A549 (cell line): ENCODE measurements at regions of chr17 and their contacts with region 1.

Region 1: GRCh38 chr17:3913531-3914311 is 2.5 kb downstream of the P2RX1 start:
- DNase-seq: peak; percentile 77 to 91
- ATAC-seq: peak; percentile 73 to 92
- H3K4me3 ChIP-seq: no peak overlapping the region
- H3K27ac ChIP-seq: peak overlapping the region in 1 of 2 experiments; percentile 65; a peak in 3 of 6 replicates
- H3K4me1 ChIP-seq: peaks cover 21% of the 10 kb centered on the region; the same call in 2 of the 3 replicates
- CTCF ChIP-seq: peak; percentile 94
- EP300 ChIP-seq: no peak
- POLR2A ChIP-seq: no peak
- RAD21 ChIP-seq: peak; percentile 88 to 91

Region 2: DNA sequence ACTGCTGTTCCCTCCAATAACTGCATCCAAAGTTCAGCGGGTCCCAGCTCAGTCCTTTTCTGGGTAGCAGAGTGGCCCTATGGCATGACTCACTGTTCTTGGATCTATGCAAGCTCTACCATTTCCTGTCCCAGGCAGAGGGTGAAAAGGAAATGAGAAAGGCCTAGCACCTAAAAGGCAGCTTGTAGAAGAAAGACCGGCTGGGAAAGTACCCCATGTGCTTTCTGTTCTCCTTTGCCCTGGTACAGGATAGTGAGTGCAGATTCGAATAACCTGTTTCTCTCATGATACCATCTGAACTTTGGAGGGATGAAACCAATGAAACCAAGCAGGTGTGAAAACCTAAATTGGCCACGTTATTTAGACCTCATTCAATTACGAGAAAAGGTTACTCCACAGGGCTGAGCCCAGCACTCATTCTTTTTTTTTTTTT is 202.8 kb before region 1 on chr17:
- CTCF ChIA-PET with region 1: no interaction called
- POLR2A ChIA-PET with region 1: no interaction called
- DNase-seq: no peak
- ATAC-seq: peak; percentile 39 to 42; a peak in 2 of 6 replicates
- H3K4me3 ChIP-seq: no peak overlapping the region
- H3K27ac ChIP-seq: no peak overlapping the region
- H3K4me1 ChIP-seq: no peaks in the 10 kb centered on the region
- CTCF ChIP-seq: no peak
- EP300 ChIP-seq: no peak
- POLR2A ChIP-seq: no peak
- RAD21 ChIP-seq: no peak

Region 3: GRCh38 chr17:3827124-3827773 is 86.5 kb before region 1 on chr17:
- CTCF ChIA-PET with region 1: interaction called, 14 read pairs
- POLR2A ChIA-PET with region 1: no interaction called
- DNase-seq: peak; percentile 75 to 86
- ATAC-seq: peak; percentile 86 to 88
- H3K4me3 ChIP-seq: no peak overlapping the region
- H3K27ac ChIP-seq: no peak overlapping the region
- H3K4me1 ChIP-seq: no peaks in the 10 kb centered on the region
- CTCF ChIP-seq: peak; percentile 87
- EP300 ChIP-seq: no peak
- POLR2A ChIP-seq: no peak
- RAD21 ChIP-seq: peak; percentile 81 to 88

Region 4: DNA sequence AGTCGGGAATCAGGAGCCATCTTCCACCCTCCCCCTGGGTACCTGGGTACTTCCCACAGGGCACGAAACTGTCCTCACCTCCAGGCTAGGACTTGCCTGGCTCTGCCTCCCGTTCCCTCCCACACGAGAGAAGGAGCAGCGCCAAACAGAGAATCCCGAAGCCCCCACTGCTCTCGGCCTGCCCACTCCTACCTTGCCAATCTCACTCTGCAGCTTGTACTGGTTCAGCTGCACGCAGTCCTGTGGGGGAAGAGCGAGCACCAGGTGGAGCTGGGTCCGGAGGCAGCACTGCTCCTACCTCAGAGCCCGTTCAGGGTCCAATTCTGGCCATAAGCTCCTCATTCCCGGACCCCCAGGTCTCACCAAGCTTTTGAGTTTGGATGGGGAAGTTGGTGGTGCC is 29.5 kb before region 1 on chr17:
- CTCF ChIA-PET with region 1: interaction called, 31 read pairs
- POLR2A ChIA-PET with region 1: no interaction called
- DNase-seq: no peak
- ATAC-seq: no peak
- H3K4me3 ChIP-seq: no peak overlapping the region
- H3K27ac ChIP-seq: no peak overlapping the region
- H3K4me1 ChIP-seq: peaks cover 37% of the 10 kb centered on the region
- CTCF ChIP-seq: no peak
- EP300 ChIP-seq: no peak
- POLR2A ChIP-seq: no peak
- RAD21 ChIP-seq: no peak

Region 5: GRCh38 chr17:3946711-3947235 is 33.1 kb after region 1 on chr17:
- CTCF ChIA-PET with region 1: interaction called, 29 read pairs
- POLR2A ChIA-PET with region 1: no interaction called
- DNase-seq: no peak
- ATAC-seq: peak in 1 of 2 experiments; percentile 10; a peak in 1 of 6 replicates
- H3K4me3 ChIP-seq: no peak overlapping the region
- H3K27ac ChIP-seq: no peak overlapping the region
- H3K4me1 ChIP-seq: no peaks in the 10 kb centered on the region
- CTCF ChIP-seq: no peak
- EP300 ChIP-seq: no peak
- POLR2A ChIP-seq: no peak
- RAD21 ChIP-seq: no peak

Region 6: DNA sequence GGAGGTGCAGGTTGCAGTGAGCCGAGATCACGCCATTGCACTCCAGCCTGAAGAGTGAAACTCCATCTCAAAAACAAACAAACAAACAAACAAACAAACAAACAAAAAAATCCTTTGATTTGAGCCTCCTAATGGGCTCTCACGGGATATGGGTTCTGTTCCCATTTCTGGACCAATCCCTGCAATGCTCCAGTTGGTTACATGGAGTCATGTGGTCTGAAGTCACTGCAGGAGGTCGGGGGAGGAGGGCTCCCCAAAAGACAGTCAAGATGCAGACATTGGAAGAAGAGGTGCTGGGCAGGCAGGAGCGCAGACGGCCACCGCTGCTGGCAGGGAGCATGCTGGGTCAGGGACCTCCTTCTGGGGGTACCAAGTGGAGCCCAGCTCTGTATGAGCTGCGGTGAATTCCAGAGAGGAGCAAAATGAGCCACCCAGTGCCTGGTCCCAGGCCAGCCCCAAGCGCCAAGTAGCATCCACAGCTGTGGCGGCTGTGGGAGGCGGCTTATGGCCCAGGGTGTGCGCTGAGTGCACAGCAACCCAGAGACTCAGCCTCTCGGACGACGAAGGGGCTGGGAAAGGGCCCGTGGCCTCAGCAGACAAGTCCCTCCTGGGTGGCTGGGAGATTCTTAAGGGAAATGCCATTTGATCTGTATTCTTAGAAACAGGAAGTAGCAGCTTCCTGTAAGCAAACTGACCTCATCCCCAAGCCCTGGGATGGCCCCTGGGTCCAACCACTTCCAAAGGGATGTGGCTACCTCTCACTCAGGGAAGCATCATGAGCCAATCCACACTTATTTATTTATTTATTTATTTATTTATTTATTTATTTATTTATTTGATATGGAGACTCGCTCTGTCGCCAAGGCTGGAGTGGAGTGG is 70.1 kb after region 1 on chr17:
- CTCF ChIA-PET with region 1: interaction called, 10 read pairs
- POLR2A ChIA-PET with region 1: no interaction called
- DNase-seq: peak in 1 of 2 experiments; percentile 48
- ATAC-seq: no peak
- H3K4me3 ChIP-seq: no peak overlapping the region
- H3K27ac ChIP-seq: no peak overlapping the region
- H3K4me1 ChIP-seq: 0 out of 3 replicates have a peak, but pooled peaks cover 4% of the 10 kb centered on the region
- CTCF ChIP-seq: no peak
- EP300 ChIP-seq: no peak
- POLR2A ChIP-seq: no peak
- RAD21 ChIP-seq: no peak

Region 7: DNA sequence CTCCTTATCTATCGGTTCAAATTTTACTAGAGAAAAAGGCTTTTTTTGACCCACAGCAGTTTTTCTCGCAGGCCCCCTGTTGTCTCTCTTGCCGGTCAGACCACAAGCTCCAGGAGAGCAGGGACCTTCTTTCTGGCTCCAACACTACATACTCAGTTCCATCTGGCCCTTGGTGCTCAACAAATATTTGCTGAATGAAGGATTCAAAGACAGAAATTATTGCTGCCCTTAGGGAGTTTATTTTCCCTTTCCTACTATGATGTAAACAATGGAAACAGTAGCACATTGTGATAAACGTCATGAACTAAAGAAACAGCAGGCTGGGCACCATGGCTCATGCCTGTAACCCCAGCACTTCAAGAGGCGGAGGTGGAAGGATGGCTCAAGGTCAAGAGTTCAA is 109.5 kb after region 1 on chr17:
- CTCF ChIA-PET with region 1: interaction called, 27 read pairs
- POLR2A ChIA-PET with region 1: interaction called, 8 read pairs
- DNase-seq: no peak
- ATAC-seq: no peak
- H3K4me3 ChIP-seq: no peak overlapping the region
- H3K27ac ChIP-seq: no peak overlapping the region
- H3K4me1 ChIP-seq: no peaks in the 10 kb centered on the region
- CTCF ChIP-seq: no peak
- EP300 ChIP-seq: no peak
- POLR2A ChIP-seq: no peak
- RAD21 ChIP-seq: no peak

Region 8: GRCh38 chr17:4074831-4075495 is 161.2 kb after region 1 on chr17:
- CTCF ChIA-PET with region 1: interaction called, 56 read pairs
- POLR2A ChIA-PET with region 1: no interaction called
- DNase-seq: peak; percentile 56 to 66
- ATAC-seq: peak; percentile 86 to 89
- H3K4me3 ChIP-seq: no peak overlapping the region
- H3K27ac ChIP-seq: no peak overlapping the region
- H3K4me1 ChIP-seq: no peaks in the 10 kb centered on the region
- CTCF ChIP-seq: peak; percentile 69
- EP300 ChIP-seq: no peak
- POLR2A ChIP-seq: no peak
- RAD21 ChIP-seq: peak; percentile 66 to 75

Region 9: DNA sequence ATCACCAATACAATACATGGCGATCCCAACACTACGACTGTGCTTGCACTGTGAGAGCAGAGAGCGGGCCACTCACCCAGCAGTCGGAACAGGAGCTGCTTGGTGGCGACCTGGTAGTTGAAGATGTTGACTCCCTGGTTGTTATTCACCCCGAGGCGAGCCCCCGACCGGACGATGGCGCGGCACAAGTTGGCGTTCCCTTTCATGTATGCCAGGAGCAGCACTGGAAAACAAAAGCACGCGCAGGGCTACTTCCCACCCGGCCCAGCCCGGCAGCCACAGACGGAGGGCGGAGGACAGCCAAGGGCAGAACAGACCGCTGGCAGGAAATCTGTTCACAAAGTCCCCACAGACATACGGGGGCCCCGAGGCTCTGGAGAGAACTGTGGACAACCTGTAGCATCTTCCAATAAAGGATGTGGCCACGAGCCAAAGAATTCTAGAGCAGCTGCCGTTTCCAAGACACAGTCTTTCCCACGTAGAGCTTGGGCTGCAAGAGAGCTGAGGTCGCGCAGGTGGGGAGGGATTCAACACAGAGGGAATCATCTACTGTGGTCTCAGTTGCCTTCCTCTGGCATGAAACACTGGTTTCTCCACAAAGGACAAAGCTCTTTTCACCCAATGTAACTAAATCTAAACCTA is 257.0 kb after region 1 on chr17:
- CTCF ChIA-PET with region 1: no interaction called
- POLR2A ChIA-PET with region 1: no interaction called
- DNase-seq: no peak
- ATAC-seq: no peak
- H3K4me3 ChIP-seq: no peak overlapping the region
- H3K27ac ChIP-seq: no peak overlapping the region
- H3K4me1 ChIP-seq: no peaks in the 10 kb centered on the region
- CTCF ChIP-seq: no peak
- EP300 ChIP-seq: no peak
- POLR2A ChIP-seq: no peak
- RAD21 ChIP-seq: no peak